Activated naive CD4-positive, alpha-beta T cell treated with anti-CD3 and anti-CD28 coated beads for 36 hours (primary cell): ENCODE measurements at regions of chr12 and their contacts with region 1.

Region 1: GRCh38 chr12:95548539-95549391 is 2.5 kb downstream of the USP44 start:
- DNase-seq: peak; percentile 75
- H3K4me3 Mint-ChIP-seq: peak overlapping the region; percentile 89
- H3K27ac Mint-ChIP-seq: peak overlapping the region; percentile 80
- H3K4me1 Mint-ChIP-seq: peaks cover 41% of the 10 kb centered on the region
- H3K27me3 Mint-ChIP-seq: no peaks in the 10 kb centered on the region

Region 2: DNA sequence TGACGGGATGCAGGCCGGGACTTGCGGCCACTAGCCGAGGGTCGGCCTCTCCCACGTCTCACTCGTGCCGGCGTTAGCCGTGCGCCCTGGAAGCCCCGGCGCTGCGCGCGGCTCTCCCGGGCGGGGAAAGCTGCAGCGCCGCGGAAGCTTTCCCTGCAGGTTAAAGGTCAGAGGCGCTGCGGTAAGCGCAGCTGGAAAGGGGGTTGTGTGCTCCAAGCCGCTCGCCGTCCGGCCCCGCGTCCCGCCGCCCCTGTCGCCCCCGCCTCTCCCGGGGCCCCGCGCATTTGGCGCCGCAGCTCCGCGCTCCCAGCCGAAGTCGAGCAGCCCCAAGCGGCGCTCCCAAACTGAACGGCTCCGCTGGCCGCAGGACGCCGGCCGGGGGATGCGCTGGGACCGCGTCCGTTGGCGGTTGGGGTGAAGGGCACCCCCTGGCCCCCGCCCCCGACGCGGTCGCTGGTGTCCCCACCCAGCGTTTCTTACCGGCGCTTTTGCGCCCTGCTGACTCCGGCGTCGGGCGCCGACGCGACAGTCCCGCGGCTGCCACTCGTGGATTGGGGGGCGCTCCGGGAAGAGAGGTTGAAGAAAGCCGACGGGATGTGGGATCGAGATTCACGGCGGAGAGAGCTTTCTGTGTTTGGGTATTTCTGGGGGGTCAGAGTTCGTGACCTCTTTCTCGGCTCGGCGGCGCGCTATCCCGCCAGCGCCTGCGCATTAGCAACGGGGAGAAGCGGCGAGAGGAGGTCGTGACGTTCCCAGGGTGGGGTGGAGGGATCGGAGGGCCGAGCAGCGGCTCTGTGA is 475.7 kb before region 1 on chr12 and contains the start of gene NR2C1:
- CTCF ChIA-PET with region 1: no interaction called
- intact Hi-C with region 1: loop called (anchors 5 kb)
- DNase-seq: peak; percentile 95
- H3K4me3 Mint-ChIP-seq: peak within 1 kb of the TSS; percentile 92
- H3K27ac Mint-ChIP-seq: peak within 1 kb of the TSS; percentile 63
- H3K4me1 Mint-ChIP-seq: peaks cover 19% of the 10 kb centered on the region
- H3K27me3 Mint-ChIP-seq: no peaks in the 10 kb centered on the region
- total RNA-seq, gene NR2C1: 19.8 to 24.6 TPM

Region 3: GRCh38 chr12:95663525-95663924 is 114.8 kb after region 1 on chr12:
- CTCF ChIA-PET with region 1: no interaction called
- intact Hi-C with region 1: no loop called
- DNase-seq: no peak
- H3K4me3 Mint-ChIP-seq: no peak overlapping the region
- H3K27ac Mint-ChIP-seq: no peak overlapping the region
- H3K4me1 Mint-ChIP-seq: no peaks in the 10 kb centered on the region
- H3K27me3 Mint-ChIP-seq: peaks cover 4% of the 10 kb centered on the region

Region 4: DNA sequence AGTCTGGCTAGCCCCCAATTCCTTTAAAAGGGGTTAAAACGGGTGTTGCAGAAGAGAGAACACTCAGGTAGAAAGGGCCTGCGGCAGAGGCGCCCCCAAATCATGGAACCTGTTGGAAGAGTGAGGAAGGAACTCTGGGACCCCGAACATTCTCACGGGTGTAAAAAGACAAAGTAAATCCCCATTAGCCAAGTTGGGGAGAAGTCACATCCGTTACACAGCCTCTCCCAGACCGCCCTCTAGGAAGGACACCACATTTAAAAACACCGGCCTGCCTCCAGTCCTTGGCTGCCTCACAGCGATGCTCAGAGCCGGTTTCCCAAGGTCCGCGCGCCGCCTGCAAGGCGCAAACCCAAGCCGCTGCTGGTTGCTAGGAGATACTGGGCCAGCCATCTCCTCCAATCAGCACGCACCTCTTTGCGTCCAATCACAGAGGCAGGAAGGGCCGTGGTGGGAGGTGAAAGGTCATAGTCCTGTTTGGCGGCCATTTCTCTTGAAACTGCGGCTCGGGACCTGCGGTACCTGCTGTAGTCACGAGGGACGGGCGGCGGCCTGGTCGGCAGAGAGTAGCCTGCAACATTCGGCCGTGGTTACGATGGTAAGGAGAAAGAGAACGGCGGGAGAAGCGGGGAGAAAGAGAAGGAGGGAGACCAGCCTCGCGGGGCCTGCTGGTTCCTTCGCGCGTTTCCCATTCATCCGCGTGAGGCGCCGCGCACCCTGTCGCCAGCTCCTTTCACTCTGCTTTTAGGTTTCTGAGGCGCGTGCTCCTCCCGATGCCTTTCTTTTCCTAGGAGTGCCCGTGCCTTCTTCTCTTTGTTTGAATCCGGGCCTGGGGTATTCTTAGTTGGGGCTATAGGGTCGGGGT is 309.9 kb after region 1 on chr12 and contains the start of gene SNRPF:
- CTCF ChIA-PET with region 1: no interaction called
- intact Hi-C with region 1: loop called (anchors 2 kb)
- DNase-seq: peak; percentile 97
- H3K4me3 Mint-ChIP-seq: no peak within 1 kb of the TSS
- H3K27ac Mint-ChIP-seq: no peak within 1 kb of the TSS
- H3K4me1 Mint-ChIP-seq: peaks cover 25% of the 10 kb centered on the region
- H3K27me3 Mint-ChIP-seq: peaks cover 3% of the 10 kb centered on the region
- total RNA-seq, gene SNRPF: 57.4 to 59.9 TPM